GM12878 (cell line): ENCODE measurements at regions of chr16 and their contacts with region 1.

Region 1: GRCh38 chr16:75576384-75576811 is 10.2 kb downstream of the GABARAPL2 start:
- DNase-seq: no peak
- ATAC-seq: peak; percentile 49
- H3K4me3 ChIP-seq: no peak overlapping the region
- H3K27ac ChIP-seq: peak overlapping the region; percentile 49
- H3K4me1 ChIP-seq: peaks cover 63% of the 10 kb centered on the region
- H3K27me3 ChIP-seq: no peaks in the 10 kb centered on the region
- CTCF ChIP-seq: no peak
- EP300 ChIP-seq: no peak
- POLR2A ChIP-seq: no peak
- RAD21 ChIP-seq: no peak

Region 2: GRCh38 chr16:75319513-75320411 is 256.6 kb before region 1 on chr16:
- CTCF ChIA-PET with region 1: no interaction called
- POLR2A ChIA-PET with region 1: no interaction called
- RAD21 ChIA-PET with region 1: no interaction called
- SMC1A ChIA-PET with region 1: no interaction called
- in situ Hi-C with region 1: no loop called
- intact Hi-C with region 1: no loop called
- DNase-seq: peak; percentile 78
- ATAC-seq: peak; percentile 76
- H3K4me3 ChIP-seq: peak overlapping the region; percentile 4; the same call in 1 of the 2 replicates
- H3K27ac ChIP-seq: peak overlapping the region; percentile 79
- H3K4me1 ChIP-seq: peaks cover 34% of the 10 kb centered on the region
- H3K27me3 ChIP-seq: no peaks in the 10 kb centered on the region
- CTCF ChIP-seq: no peak
- EP300 ChIP-seq: peak; percentile 67 to 86; a peak in 3 of 4 replicates
- POLR2A ChIP-seq: no peak
- RAD21 ChIP-seq: 0 out of 2 replicates have a peak, but pooled peaks have one; percentile 14

Region 3: DNA sequence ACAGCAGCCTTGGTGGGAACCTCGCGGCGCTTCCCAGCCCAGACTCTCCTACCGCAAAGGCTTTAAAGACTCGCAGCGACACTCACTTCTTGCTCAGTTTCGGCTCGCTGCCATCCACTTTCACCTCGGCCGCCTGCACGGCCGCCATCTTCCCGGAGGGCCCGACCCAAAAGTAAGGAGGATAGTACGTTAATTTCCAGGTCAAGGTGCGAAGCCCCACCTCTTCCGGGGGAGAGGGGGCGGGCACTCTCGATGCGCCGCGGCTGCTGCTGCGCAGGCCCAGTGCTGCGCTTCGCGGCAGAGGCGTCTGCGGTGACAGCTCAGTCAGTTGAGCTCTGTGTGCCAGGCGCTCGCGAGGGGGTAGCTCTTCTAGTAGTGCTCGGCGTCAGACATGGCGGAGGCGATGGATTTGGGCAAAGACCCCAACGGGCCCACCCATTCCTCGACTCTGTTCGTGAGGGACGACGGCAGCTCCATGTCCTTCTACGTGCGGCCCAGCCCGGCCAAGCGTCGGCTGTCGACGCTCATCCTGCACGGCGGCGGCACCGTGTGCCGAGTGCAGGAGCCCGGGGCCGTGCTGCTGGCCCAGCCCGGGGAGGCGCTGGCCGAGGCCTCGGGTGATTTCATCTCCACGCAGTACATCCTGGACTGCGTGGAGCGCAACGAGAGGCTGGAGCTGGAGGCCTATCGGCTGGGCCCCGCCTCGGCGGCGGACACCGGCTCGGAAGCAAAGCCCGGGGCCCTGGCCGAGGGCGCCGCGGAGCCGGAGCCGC is 71.3 kb after region 1 on chr16 and contains the starts of genes KARS1 and TERF2IP:
- CTCF ChIA-PET with region 1: no interaction called
- POLR2A ChIA-PET with region 1: interaction called, 6 read pairs
- RAD21 ChIA-PET with region 1: interaction called, 3 read pairs
- SMC1A ChIA-PET with region 1: no interaction called
- in situ Hi-C with region 1: no loop called
- intact Hi-C with region 1: loop called (anchors 1 kb)
- DNase-seq: peak; percentile 85
- ATAC-seq: peak; percentile 91
- H3K4me3 ChIP-seq: peak within 1 kb of the TSS; percentile 85
- H3K27ac ChIP-seq: peak within 1 kb of the TSS; percentile 86
- H3K4me1 ChIP-seq: peaks cover 25% of the 10 kb centered on the region
- H3K27me3 ChIP-seq: no peaks in the 10 kb centered on the region; a peak in 1 of 4 replicates
- CTCF ChIP-seq: no peak
- EP300 ChIP-seq: no peak
- POLR2A ChIP-seq: peak; percentile 98
- RAD21 ChIP-seq: no peak
- polyA plus RNA-seq, gene KARS1: 187 to 207 TPM
- polyA plus RNA-seq, gene TERF2IP: 19.6 to 40.6 TPM